Mucosa of descending colon (tissue), 3 donors: ENCODE measurements at regions of chr13 and their contacts with region 1.

Region 1: GRCh38 chr13:32019612-32020233 is 11.9 kb upstream of the FRY start:
- DNase-seq: peak in 1 of 3 donors; percentile 71
- ATAC-seq: peak; percentile 57
- H3K4me3 ChIP-seq: no peak overlapping the region
- H3K4me1 ChIP-seq: no peaks in the 10 kb centered on the region
- CTCF ChIP-seq: no peak

Region 2: DNA sequence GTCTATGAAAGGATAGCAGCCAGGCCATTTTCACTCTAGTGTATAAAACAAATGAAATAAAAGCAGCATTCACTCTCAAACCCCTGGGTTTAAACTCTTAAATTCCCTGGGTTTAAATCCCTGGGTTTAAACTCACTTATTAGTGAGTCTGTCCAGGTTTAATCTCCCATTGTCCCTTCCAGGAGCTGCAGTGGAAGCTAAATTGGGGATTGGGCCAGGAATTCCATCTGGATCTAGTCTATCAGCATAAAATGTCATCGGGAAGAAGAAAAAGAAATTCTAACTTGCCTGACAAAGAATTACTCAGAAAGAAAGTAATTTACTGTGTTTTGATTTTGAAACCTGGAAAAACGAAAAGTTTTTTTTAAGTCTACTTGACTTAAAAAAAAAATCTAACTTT is 66.6 kb after region 1 on chr13:
- intact Hi-C with region 1: no loop called
- DNase-seq: no peak
- ATAC-seq: no peak
- H3K4me3 ChIP-seq: no peak overlapping the region
- H3K4me1 ChIP-seq: no peaks in the 10 kb centered on the region
- CTCF ChIP-seq: no peak

Region 3: DNA sequence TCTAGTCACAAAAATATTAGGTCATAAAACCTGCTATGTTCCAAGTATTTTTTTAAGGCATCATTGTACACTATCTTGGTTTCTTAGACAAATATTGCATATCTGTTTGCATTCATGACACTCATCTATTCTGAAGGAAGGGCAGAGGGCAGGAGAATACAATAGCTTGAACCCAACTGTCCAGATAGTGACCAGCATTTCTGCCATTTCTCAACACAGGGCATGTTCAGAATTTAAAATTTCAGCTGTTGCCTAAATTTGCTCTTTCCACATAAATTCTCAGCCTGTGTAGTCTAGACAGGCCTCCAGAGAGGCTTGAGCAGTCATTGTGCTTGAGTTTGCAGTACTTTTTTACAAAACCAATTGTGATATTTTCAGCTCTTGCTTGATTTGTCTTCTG is 176.0 kb after region 1 on chr13:
- intact Hi-C with region 1: no loop called
- DNase-seq: no peak
- ATAC-seq: no peak
- H3K4me3 ChIP-seq: no peak overlapping the region
- H3K4me1 ChIP-seq: no peaks in the 10 kb centered on the region
- CTCF ChIP-seq: no peak

Region 4: GRCh38 chr13:32297206-32297605 is 277.5 kb after region 1 on chr13:
- intact Hi-C with region 1: loop called in 1 of 2 experiments (anchors 10 kb)
- DNase-seq: no peak
- ATAC-seq: no peak
- H3K4me3 ChIP-seq: no peak overlapping the region
- H3K4me1 ChIP-seq: no peaks in the 10 kb centered on the region
- CTCF ChIP-seq: no peak